ENCODE measurements at regions of chr7 and their contacts with region 1.

Region 1: DNA sequence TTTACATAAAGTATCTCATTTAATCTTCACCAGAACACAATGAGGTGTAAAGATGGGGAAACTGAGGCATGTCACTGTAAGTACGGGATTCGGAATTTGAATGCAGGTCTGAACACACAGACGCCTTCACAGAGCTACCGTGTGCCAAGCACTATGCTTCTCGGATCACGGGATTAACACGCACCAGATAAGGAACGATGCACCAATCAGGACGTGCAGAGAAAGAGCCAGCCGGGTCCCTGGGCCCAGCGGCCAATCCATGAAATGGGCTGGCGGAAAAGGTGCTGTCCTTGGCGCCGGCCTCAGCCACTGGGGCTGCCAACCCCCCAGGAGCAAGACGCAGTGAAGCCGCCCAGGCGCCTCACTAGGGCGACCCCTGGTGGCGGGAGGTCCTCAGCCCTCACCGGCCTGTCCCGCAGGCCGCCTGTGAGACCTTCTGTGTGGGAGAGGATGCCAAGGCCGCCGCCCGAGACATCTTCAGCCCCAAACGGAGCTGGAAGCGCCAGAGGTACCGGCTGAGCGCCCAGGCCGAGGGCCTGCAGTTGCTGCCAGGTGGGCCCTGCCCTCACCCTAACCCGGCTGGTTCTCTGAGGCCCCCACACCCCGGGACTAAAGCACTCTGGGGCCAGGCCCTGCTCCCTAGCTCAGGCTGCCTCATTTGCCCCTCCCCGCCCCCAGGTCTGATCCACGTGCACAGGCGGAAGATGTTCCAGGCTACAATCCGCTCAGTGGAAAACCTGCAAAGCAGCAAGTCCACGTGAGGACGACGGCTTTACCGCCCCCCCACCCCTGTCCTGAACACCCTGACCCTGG is 15.6 kb downstream of the ATG9B start:
- DNase-seq: peak; percentile 83
- CTCF ChIP-seq: peak; percentile 83

Region 2: DNA sequence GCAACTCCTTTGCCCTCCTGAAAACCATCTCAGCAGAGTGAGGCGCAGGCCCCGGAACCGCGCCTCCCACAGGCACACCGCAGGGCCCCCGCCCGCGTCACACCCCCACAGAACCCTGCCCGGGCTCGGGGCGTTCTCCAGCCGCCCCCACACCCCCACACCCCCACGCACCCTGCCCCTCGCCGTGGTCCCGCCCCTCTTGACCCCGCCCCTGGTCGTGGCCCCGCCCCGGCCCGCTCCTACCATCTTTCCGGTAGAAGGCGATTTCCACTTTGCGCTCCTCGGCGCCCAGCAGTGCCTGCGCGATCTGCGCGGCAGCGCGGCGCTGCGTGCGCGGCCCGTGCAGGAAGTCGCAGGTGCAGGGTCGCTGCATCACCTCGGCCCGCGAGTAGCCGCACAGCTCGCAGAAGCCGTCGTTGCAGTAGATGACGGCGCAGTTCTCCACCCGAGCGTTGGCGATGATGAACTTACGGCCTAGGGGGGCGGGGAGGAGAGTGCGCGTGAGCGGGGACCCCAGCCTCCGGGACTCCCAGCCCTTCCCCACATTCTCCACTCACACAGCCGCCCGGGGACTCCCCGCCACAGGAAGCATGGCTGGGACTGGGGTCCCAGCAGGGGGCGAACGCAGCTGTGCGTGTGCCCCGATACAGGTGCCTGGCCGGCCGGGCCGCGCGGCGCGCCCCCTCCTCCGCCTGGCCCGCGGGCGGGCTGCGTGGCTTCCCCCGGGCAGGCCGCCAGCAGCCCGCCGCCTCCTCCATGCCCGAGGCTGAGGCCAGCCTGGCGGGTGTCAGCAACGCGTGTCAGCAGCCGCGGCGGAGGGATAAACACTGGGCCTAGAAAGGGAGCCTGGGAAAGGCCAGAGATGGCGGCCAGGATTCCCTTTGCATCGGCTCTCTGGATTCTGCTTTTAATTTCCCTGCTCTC is 34.0 kb before region 1 on chr7:
- CTCF ChIA-PET with region 1: interaction called, 20 read pairs
- POLR2A ChIA-PET with region 1: no interaction called
- DNase-seq: peak; percentile 74
- CTCF ChIP-seq: peak; percentile 55

Region 3: DNA sequence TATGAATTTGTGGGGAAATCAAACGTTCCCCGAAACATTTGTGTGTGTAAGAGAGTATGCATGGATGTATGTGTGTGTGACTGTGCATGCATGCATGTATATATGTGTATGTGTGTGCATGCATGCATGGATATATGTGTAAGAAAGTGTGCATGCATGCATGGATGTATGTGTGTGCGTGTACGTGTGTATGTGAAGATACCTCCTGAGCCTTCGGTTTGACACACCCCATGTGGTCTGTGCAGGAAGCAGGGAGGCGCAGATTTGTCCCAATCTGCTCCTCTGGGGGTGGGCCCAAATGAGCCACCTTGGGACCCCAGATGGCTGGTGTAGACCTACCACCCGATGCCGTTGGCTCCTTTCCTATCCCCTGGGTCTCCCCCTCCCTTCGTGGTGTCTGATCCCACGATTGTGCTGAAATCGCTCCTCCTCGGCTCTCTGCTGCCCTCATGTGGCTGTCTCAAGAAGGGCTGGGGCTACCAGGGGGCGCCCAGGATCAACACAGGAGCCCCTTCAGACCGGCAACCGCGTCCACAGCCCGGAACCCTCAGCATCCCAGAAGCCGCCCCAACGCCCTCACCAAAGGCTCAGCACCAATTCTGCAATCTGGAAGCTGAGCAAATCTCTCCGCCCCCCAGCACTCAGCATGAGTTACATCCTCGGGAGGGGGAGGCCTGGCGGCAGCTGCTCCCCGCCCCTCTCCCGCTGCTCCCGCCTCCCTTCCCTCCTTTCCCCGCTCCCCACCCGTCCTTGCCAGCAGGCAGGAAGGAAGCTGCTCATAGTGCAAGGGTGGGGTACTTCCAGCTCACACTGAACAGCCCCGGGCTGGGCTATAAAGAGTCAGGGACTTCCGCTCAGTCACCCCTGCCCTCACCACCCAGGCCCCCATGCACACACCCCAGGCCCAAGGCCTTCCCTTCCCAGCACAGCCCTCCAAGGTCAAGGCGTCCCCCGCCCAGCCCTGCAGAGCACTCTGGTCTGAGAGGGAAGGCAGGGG is 20.2 kb before region 1 on chr7:
- CTCF ChIA-PET with region 1: interaction called, 20 read pairs
- POLR2A ChIA-PET with region 1: no interaction called
- DNase-seq: peak; percentile 78
- CTCF ChIP-seq: peak; percentile 73

Region 4: GRCh38 chr7:150994141-150994964 is 14.4 kb before region 1 on chr7:
- CTCF ChIA-PET with region 1: interaction called, 20 read pairs
- POLR2A ChIA-PET with region 1: no interaction called
- DNase-seq: no peak
- CTCF ChIP-seq: no peak

Region 5: DNA sequence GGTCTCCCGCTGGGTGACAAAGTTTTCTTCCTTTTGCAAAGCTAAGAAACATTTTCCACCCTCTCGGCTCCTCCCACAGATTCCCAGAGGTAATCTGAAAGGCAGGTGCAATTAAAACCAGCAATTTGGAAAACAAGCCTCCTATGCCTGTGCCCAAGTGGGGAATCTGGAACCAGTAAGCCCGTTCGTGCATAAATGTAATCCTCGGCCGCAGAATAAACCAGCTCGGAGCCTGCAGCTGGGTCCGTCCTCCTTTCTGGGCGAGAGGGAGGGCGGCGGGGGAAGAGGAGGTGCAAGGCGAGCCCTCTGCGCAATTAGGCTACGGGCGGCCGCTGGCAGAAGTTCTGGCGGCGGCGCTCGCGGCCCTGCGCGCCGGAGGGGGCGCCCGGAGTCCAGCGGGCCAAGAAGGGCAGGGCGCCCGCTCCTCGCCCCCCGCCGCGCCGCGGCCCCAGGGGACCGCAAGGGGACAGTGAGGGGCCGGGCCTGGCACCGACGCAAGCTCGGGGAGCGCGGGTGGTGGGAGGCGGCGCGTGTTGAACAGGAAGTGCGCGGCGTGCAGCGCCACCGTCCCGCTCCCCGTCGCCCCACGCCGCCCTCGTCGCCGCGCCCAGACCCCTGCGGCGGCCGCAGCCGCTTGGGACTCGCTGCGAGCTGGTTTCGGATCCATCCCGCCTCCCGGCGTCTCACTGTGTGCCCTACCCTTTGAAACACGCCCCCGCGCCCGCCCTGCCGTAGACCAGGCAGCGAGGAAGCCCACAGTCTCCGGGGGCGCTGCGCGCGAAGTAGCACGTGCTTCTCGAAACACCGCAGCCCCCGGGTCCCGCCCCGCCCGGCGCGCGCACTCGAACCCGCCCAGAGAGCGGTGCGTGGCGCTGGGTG is 868.4 kb after region 1 on chr7 and contains the start of gene PRKAG2:
- CTCF ChIA-PET with region 1: no interaction called
- POLR2A ChIA-PET with region 1: no interaction called
- DNase-seq: peak; percentile 67
- CTCF ChIP-seq: peak; percentile 14

Measured in GM10248 (cell line).